Common myeloid progenitor, CD34-positive (primary cell): ENCODE measurements at regions of chr3 and their contacts with region 1.

Region 1: DNA sequence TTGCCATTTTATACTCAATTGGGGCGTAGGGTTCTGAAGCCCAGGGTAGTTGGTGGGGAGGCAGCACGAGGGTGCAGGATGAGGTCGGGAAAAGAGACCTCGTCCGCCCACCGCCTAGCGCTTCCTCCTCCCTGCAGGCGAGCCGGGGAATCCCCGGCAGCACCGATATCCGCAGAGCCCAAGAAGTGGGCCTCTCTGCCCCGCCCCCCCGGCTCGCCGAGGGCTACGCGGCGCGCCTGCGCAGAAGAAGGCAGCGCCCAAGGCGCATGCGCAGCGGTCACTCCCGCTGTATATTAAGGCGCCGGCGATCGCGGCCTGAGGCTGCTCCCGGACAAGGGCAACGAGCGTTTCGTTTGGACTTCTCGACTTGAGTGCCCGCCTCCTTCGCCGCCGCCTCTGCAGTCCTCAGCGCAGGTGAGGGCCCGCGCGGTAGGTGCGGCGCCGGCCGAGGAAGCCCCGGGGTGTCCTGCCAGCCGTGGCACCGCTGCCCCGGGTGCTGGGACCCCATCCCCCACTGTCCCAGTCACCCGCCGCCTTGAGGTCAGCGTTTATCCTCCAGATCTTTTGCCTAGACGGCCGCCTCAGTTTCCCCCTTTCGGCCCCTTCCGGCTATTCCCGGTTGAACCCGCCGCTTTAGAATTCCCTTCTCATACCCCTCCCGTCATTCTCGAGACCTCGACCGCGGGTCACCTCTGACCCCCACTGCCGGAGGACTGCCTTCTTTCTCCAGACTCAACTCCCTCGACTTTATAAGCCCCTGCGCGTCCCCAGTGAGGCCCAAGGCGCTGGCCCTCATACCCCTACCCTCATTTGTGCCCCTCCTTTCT is at the start of gene ALAS1:
- DNase-seq: peak; percentile 85 to 91 (median 87)
- H3K4me3 ChIP-seq: peak within 1 kb of the TSS; percentile 80 to 99 (median 91)
- H3K27ac ChIP-seq: peak within 1 kb of the TSS; percentile 58 to 86
- H3K4me1 ChIP-seq: peaks cover 0 to 54% (median 25%) of the 10 kb centered on the region in 4 experiments
- H3K27me3 ChIP-seq: no peaks in the 10 kb centered on the region

Region 2: GRCh38 chr3:52162250-52162872 is 35.7 kb before region 1 on chr3:
- CTCF ChIA-PET with region 1: no interaction called
- POLR2A ChIA-PET with region 1: no interaction called
- DNase-seq: no peak
- H3K4me3 ChIP-seq: no peak overlapping the region
- H3K27ac ChIP-seq: no peak overlapping the region
- H3K4me1 ChIP-seq: no peaks in the 10 kb centered on the region
- H3K27me3 ChIP-seq: no peaks in the 10 kb centered on the region

Region 3: GRCh38 chr3:52185837-52186236 is 12.2 kb before region 1 on chr3:
- CTCF ChIA-PET with region 1: interaction called, 10 read pairs
- POLR2A ChIA-PET with region 1: no interaction called
- DNase-seq: peak in 2 of 3 donors; percentile 50 to 54
- H3K4me3 ChIP-seq: no peak overlapping the region
- H3K27ac ChIP-seq: no peak overlapping the region
- H3K4me1 ChIP-seq: peaks cover 11 to 53% (median 26%) of the 10 kb centered on the region in 4 experiments
- H3K27me3 ChIP-seq: no peaks in the 10 kb centered on the region

Region 4: DNA sequence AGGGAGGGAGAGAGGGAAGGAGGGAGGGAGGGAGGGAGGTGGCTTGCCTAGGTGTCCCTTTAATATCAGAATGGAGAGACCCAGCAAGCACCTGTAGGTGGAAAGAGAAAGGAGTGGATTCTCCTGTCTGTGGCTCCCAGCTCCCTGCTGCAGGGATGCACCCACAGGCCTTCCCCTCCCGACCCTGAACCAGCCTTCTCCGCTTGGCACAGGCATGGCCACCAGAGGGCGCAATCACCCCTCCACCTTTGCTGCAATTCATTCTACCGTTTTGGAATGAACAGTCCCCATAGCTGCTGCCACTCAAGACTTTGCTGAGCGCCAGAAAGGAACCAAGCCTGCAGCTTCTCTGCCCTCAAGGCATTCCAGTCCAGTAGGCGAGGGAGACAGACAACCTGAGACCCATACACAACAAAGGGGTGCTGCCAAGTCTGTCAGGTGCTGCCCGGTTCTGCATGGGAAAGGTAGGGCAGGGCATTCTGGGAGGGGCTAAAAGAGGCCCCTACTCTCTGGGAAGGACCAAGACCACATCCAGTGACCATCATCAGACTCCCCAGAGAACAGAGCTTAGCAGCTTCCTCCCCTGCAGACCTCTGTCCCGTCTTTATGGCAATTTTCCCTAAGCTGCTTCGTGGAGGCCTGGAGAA is 22.4 kb after region 1 on chr3:
- CTCF ChIA-PET with region 1: interaction called, 32 read pairs
- POLR2A ChIA-PET with region 1: no interaction called
- DNase-seq: peak; percentile 79 to 90 (median 84)
- H3K4me3 ChIP-seq: no peak overlapping the region
- H3K27ac ChIP-seq: no peak overlapping the region
- H3K4me1 ChIP-seq: peaks cover 10 to 80% (median 59%) of the 10 kb centered on the region in 4 experiments
- H3K27me3 ChIP-seq: no peaks in the 10 kb centered on the region